Dorsolateral prefrontal cortex (tissue), 120 donors: ENCODE measurements at regions of chr6 and their contacts with region 1.

Region 1: GRCh38 chr6:151014404-151015100 is 149.1 kb downstream of the MTHFD1L start:
- DNase-seq: peak; percentile 41 to 86 (median 70)
- H3K4me3 ChIP-seq: peak overlapping the region in 23 of 59 donors; percentile 2 to 41 (median 27)
- H3K27ac ChIP-seq: peak overlapping the region in 12 of 59 donors; percentile 13 to 53 (median 31)
- H3K27me3 ChIP-seq: no peaks in the 10 kb centered on the region
- CTCF ChIP-seq: peak; percentile 87 to 99 (median 96)

Region 2: DNA sequence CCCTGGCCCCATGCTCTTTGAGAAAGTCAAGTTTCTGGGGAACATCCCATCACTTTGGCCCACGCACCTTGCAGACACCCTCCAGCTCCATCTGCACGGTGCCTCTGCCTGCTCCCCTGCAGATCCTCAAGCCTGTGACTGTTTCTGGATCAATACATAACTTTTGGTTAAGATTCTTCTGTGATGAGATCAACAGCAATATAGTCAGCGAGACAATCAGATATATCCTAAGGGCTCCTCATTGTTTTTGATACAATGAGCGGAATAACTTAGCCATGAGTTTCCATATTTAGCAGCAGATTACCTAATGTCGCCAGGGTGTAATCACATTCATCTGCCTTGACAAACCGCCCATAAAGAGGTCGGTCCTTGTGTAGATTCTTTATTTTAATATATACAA is 258.4 kb before region 1 on chr6:
- intact Hi-C with region 1: no loop called
- DNase-seq: no peak
- H3K4me3 ChIP-seq: no peak overlapping the region
- H3K27ac ChIP-seq: peak overlapping the region in 3 of 59 donors; percentile 18 to 44 (median 27)
- H3K27me3 ChIP-seq: no peaks in the 10 kb centered on the region
- CTCF ChIP-seq: no peak

Region 3: DNA sequence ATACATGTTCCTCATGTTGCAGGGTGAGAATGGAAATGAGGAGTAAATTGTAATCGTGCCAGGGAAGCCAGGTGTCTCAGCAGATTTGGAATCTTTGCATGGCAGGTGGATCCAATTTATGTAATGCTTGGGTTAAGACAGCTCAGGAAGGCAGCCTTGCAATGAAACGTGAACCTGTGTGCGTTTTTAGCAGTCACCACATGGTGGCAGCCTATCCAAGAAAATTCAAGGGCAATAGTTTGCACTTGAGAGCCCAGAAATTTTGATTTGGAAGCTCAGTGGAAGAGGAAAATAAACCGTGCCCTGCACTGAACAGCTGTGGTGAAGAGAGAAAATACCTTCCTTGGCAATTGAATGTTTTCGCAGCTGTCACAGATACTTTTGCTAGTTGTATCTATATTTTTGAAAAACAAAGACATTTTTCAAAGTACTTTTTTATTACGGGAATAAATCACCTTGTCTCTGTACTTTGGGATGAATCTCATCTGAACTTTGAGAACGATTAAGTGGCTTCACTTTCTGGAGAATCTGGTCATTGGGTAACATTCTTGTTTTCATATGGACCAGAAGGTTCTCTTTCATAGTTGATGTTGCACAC is 122.6 kb before region 1 on chr6:
- intact Hi-C with region 1: loop called (anchors 5 to 10 kb)
- DNase-seq: peak; percentile 31 to 90 (median 73)
- H3K4me3 ChIP-seq: no peak overlapping the region
- H3K27ac ChIP-seq: peak overlapping the region in 4 of 59 donors; percentile 3 to 86 (median 16)
- H3K27me3 ChIP-seq: no peaks in the 10 kb centered on the region
- CTCF ChIP-seq: peak; percentile 71 to 97 (median 91)